Activated CD4-positive, alpha-beta memory T cell treated with anti-CD3 and anti-CD28 coated beads, Interleukin-2, amount 10 ng/mL, durations not matched to agents 7 days and 5 days (primary cell): ENCODE measurements at regions of chr6 and their contacts with region 1.

Region 1: DNA sequence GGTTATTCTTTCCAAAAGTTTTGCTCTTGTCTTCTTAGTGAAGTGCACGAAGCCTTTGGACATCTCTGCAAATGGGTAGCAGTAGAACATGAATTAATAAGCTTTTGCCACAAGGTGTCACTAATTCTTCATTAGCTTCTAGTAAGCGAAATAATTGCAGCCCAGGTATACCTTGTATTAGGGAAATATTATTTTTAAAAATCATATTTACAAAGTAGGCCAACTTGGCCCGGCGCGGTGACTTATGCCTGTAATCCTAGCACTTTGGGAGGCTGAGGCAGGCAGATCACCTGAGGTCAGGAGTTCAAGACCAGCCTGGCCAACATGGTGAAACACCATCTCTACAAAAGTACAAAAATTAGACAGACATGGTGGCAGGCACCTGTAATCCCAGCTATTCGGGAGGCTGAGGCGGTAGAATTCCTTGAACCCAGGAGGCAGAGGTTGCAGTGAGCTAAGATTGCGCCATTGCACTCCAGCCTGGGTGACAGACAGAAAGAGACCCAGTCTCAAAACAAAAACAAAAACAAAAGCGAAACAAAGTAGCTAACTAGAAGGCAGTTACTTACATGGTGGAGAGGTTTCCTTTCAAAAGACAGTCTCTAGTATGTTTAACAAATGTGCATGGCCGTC is 8.8 kb upstream of the RSPH3 start:
- DNase-seq: peak; percentile 28
- H3K4me3 Mint-ChIP-seq: peak overlapping the region; percentile 44
- H3K27ac Mint-ChIP-seq: peak overlapping the region; percentile 56
- H3K4me1 Mint-ChIP-seq: peaks cover 42% of the 10 kb centered on the region
- H3K27me3 Mint-ChIP-seq: no peaks in the 10 kb centered on the region

Region 2: DNA sequence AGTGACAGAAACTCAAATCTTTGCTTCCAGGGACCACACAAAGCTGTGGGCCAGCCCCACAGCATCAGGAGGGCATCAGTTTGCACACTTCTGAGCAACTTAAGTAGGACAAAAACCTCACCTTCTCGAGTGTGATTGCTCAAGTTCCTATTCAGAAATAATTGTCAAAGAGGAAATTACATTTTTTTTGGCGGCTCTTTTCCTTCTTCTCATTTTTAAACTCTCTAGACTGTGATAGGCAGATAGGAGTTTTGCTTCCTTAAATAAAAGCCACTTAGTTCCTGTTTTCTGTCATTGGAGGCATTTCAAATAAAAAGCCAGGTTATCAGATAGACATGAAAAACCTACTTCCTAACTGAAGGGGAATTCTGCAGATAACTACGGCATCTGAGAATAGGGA is 47.2 kb after region 1 on chr6:
- CTCF ChIA-PET with region 1: no interaction called
- POLR2A ChIA-PET with region 1: no interaction called
- DNase-seq: no peak
- H3K4me3 Mint-ChIP-seq: no peak overlapping the region
- H3K27ac Mint-ChIP-seq: no peak overlapping the region
- H3K4me1 Mint-ChIP-seq: peaks cover 54% of the 10 kb centered on the region
- H3K27me3 Mint-ChIP-seq: peaks cover 3% of the 10 kb centered on the region

Region 3: DNA sequence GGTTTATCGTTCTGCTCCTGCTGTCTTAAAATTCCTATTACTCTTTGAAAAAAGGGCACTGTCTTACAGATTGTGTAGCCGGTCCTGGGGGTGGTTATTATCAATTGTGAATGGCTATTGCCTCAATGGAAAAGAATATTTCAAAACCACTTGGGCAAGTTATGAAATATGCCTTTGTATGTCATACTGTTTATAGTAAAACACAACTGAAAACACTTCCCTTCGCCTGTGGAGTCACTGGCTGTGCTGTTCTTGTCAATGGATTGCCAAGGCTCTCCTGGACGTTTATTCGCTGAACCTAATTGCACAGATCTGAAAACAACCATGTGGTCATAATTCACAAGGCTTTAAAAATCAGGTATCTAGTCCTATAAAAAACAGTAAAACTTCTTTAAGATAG is 83.9 kb after region 1 on chr6:
- CTCF ChIA-PET with region 1: interaction called, 13 read pairs
- POLR2A ChIA-PET with region 1: no interaction called
- DNase-seq: no peak
- H3K4me3 Mint-ChIP-seq: no peak overlapping the region
- H3K27ac Mint-ChIP-seq: no peak overlapping the region
- H3K4me1 Mint-ChIP-seq: peaks cover 36% of the 10 kb centered on the region
- H3K27me3 Mint-ChIP-seq: peaks cover 9% of the 10 kb centered on the region

Region 4: DNA sequence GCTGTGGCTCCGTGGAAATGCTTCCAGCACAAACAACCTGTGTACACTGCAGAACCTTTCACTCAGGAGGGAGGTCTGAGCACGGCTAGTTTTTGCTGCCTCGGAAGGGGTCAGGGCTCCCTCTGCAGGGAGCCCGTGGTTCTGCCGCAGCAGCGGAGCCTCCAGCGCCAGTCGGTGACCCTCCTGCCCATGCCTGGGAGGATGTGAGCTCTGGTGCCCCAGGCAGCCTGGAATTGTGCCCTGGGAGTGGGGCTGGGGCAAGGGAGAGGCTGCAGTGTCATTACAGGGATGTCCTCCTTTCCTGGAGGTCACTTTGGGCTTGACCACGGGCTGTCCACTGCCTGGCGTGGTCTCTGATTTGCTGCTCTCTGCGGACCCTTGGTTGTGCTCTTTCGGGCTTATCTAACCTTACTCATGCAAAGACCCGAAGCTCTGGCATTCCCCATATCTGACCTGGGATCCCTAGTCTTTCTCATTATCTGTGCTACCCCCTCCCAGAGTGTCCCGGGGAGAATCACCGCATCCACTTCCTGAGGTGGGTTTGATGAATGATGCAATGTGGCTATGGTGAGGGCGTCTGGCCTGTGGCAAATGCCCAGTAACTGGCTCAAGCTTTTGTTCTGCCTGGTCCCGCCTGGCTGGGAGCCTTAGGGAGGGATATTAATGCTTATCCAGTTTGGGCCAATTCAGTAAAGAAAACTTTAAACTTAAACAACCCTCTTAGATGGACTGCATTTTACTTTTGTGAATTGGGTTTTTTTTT is 95.6 kb after region 1 on chr6:
- CTCF ChIA-PET with region 1: interaction called, 410 read pairs
- POLR2A ChIA-PET with region 1: interaction called, 27 read pairs
- DNase-seq: peak; percentile 84
- H3K4me3 Mint-ChIP-seq: no peak overlapping the region
- H3K27ac Mint-ChIP-seq: peak overlapping the region; percentile 22
- H3K4me1 Mint-ChIP-seq: peaks cover 64% of the 10 kb centered on the region
- H3K27me3 Mint-ChIP-seq: no peaks in the 10 kb centered on the region

Region 5: GRCh38 chr6:159125014-159125609 is 116.3 kb after region 1 on chr6:
- CTCF ChIA-PET with region 1: interaction called, 14 read pairs
- POLR2A ChIA-PET with region 1: interaction called, 3 read pairs
- DNase-seq: no peak
- H3K4me3 Mint-ChIP-seq: no peak overlapping the region
- H3K27ac Mint-ChIP-seq: no peak overlapping the region
- H3K4me1 Mint-ChIP-seq: no peaks in the 10 kb centered on the region
- H3K27me3 Mint-ChIP-seq: peaks cover 20% of the 10 kb centered on the region